ENCODE measurements at regions of chr3 and their contacts with region 1.

Region 1: DNA sequence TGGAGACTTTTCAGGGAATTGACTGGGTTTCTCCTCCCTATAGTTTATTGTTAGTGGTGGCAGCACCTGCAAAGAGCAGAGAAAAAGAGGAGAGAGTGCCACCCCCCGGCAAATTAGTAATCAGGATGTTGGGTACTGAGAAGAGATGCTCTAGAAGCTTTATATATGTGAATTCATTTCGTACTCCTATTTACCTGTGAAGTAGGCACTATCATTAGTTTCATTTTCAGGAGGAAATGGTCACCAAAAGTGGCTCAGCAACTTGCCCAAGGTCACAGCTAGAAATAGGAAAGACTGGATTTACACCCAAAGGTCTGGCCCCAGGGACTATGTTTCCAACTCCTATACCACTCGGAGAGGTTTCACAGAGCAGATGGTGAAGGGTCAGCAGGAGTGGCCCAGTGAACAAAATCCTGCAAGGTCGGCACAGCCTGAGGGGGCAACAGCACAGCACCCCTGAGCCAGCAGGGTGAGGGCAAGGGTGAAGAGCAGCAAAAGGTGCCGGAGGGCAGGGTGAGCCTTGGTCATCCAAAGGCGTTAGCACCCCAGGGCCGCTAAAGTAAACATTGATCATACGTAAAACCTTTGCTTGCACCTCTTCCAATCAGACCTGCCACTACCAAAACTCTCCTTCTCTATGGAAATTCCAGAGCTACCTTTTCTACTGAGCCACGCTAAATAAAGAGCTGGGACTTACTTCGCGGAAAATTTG is 23.6 kb downstream of the VGLL4 start:
- DNase-seq: no peak
- H3K4me3 ChIP-seq: no peak overlapping the region
- H3K4me3 Mint-ChIP-seq: no peak overlapping the region
- H3K27ac Mint-ChIP-seq: peak overlapping the region; percentile 52
- H3K4me1 ChIP-seq: peaks cover 57% of the 10 kb centered on the region
- H3K4me1 Mint-ChIP-seq: peaks cover 56% of the 10 kb centered on the region
- H3K27me3 ChIP-seq: no peaks in the 10 kb centered on the region
- H3K27me3 Mint-ChIP-seq: no peaks in the 10 kb centered on the region
- CTCF ChIP-seq: no peak

Region 2: GRCh38 chr3:11530153-11530721 is 89.9 kb before region 1 on chr3:
- CTCF ChIA-PET with region 1: no interaction called
- POLR2A ChIA-PET with region 1: no interaction called
- intact Hi-C with region 1: no loop called
- DNase-seq: peak in 1 of 2 experiments; percentile 21
- H3K4me3 ChIP-seq: no peak overlapping the region
- H3K4me3 Mint-ChIP-seq: no peak overlapping the region
- H3K27ac Mint-ChIP-seq: no peak overlapping the region
- H3K4me1 ChIP-seq: no peaks in the 10 kb centered on the region
- H3K4me1 Mint-ChIP-seq: no peaks in the 10 kb centered on the region
- H3K27me3 ChIP-seq: no peaks in the 10 kb centered on the region
- H3K27me3 Mint-ChIP-seq: no peaks in the 10 kb centered on the region
- CTCF ChIP-seq: no peak

Region 3: GRCh38 chr3:11600501-11601282 is 19.4 kb before region 1 on chr3:
- CTCF ChIA-PET with region 1: interaction called, 3 read pairs
- POLR2A ChIA-PET with region 1: interaction called, 11 read pairs
- intact Hi-C with region 1: loop called (anchors 1 kb)
- DNase-seq: peak; percentile 90 to 93
- H3K4me3 ChIP-seq: no peak overlapping the region
- H3K4me3 Mint-ChIP-seq: peak overlapping the region; percentile 57
- H3K27ac Mint-ChIP-seq: peak overlapping the region; percentile 96
- H3K4me1 ChIP-seq: peaks cover 17% of the 10 kb centered on the region
- H3K4me1 Mint-ChIP-seq: peaks cover 33% of the 10 kb centered on the region
- H3K27me3 ChIP-seq: no peaks in the 10 kb centered on the region
- H3K27me3 Mint-ChIP-seq: no peaks in the 10 kb centered on the region
- CTCF ChIP-seq: peak in 1 of 2 experiments; percentile 6

Region 4: GRCh38 chr3:12967606-12968351 is 1347.7 kb after region 1 on chr3:
- CTCF ChIA-PET with region 1: no interaction called
- POLR2A ChIA-PET with region 1: no interaction called
- intact Hi-C with region 1: no loop called
- DNase-seq: peak; percentile 88
- H3K4me3 ChIP-seq: peak overlapping the region; percentile 85
- H3K4me3 Mint-ChIP-seq: peak overlapping the region; percentile 95
- H3K27ac Mint-ChIP-seq: no peak overlapping the region
- H3K4me1 ChIP-seq: peaks cover 34% of the 10 kb centered on the region
- H3K4me1 Mint-ChIP-seq: peaks cover 34% of the 10 kb centered on the region
- H3K27me3 ChIP-seq: no peaks in the 10 kb centered on the region
- H3K27me3 Mint-ChIP-seq: no peaks in the 10 kb centered on the region
- CTCF ChIP-seq: no peak

Measured in Caco-2 (cell line).